ENCODE measurements at regions of chr18 and their contacts with region 1.

Region 1: DNA sequence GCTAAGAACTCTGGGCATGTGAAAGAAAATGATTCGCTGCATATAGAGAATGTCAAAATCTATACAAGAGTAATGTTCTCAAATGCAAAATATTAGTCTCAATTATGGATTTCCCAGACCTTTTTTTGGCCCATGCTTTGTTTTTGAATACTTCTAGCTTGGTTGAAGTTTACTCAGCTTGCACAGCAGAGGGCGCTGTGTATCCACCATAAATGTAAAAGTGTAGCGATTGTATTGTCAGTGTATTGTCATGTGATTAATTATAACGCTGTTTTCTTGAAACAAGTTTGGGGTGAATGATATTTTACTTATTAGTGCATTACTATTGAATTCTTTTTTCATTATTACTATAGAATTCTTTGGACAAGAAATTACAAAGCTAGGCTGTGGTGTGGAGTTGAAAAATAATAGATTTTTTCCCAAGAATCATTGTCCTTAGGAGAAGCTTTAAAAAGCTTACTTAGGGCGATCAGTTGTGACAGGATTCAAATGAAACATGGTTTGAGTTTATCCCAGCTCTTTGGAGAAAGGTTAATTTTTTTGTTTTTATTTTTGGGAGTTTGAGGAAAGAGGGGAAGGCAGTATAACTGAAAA is 98.3 kb downstream of the PIK3C3 start:
- DNase-seq: no peak
- H3K4me3 ChIP-seq: no peak overlapping the region
- CTCF ChIP-seq: peak; percentile 66

Region 2: GRCh38 chr18:41972067-41972925 is 81.0 kb before region 1 on chr18:
- CTCF ChIA-PET with region 1: no interaction called
- POLR2A ChIA-PET with region 1: no interaction called
- DNase-seq: no peak
- H3K4me3 ChIP-seq: no peak overlapping the region
- CTCF ChIP-seq: no peak

Region 3: GRCh38 chr18:42018831-42019230 is 34.5 kb before region 1 on chr18:
- CTCF ChIA-PET with region 1: interaction called, 13 read pairs
- POLR2A ChIA-PET with region 1: no interaction called
- DNase-seq: no peak
- H3K4me3 ChIP-seq: no peak overlapping the region
- CTCF ChIP-seq: no peak

Region 4: GRCh38 chr18:42072407-42072806 is 19.1 kb after region 1 on chr18:
- CTCF ChIA-PET with region 1: interaction called, 143 read pairs
- POLR2A ChIA-PET with region 1: no interaction called
- DNase-seq: no peak
- H3K4me3 ChIP-seq: no peak overlapping the region
- CTCF ChIP-seq: no peak

Region 5: DNA sequence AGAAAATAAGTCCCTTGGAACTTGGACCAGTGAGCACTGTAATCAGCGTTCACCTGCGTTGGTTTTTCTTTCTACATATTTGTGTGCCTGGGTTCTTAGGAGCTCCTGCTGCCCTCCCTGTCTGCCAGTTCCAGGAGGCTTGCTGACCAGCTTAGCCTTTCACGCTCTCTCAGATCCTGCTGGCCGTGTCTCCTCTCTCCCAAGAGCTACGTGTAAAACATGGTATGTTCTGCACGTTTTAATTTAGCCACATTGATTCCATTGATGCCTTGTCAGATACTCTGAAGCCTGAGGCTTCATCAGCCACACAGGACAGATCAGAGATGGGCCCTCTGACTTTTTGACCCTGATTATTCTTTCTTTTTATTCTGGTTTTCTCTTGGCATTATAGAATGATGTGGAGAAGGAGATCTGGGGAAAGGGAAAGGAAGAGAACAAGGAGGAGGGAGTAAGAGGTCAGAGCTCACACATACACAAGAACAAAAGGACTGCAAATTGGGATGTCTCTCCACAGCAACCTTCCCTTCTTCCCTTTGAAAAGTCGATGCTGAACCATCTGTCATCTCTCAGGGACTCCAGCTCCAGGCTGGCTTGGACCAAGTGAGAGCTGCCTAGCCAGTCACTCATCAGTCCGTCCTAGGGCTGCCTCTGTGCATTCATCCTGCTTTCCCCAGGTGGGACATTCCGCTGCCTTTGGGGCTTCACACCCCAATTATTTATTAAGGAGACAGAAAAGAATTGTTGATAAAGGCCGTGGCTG is 54.6 kb after region 1 on chr18:
- CTCF ChIA-PET with region 1: interaction called, 53 read pairs
- POLR2A ChIA-PET with region 1: no interaction called
- DNase-seq: no peak
- H3K4me3 ChIP-seq: no peak overlapping the region
- CTCF ChIP-seq: no peak

Region 6: DNA sequence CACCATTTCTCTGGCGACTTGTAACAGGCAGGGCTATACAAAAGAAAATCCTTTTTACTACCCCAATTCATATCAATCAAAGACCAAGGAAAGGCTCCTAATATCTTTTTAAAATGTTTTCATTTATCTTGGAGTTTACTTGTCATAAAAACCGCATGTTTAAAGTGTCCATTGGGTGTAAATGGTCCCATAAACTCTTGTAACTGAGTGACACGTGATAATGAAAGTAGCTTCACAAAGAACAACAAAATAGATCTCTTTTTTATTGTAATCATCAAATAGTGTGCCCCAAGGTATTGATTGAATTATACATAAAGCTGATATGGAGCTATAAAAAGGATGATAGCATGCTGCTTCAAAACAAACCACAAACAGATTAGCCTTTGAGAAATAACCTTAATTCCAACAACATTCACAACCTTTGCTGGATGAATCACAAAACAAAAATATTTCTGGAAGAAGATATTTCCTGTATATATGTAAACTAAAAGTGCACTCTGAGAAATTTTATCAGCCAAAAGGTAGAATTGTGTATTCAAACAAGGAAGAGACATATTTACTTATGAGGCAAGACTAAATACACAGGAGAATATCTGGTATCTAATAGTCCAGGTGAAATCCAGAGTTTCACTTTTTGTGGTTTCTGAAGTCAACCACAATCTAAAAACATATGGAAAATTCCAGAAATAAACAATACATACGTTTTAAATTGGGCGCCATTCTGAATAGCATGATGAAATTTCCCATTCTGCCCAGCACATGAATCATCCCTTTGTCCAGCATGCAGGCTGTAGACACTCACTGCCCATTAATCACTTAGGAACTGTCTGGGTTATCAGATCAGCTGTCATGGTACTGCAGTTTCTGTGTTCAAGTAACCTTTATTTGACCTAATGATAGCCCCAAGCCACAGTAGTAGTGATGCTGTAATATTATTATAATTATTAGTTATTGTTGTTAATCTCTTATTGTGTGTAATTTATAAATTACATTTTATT is 139.3 kb after region 1 on chr18:
- CTCF ChIA-PET with region 1: no interaction called
- POLR2A ChIA-PET with region 1: no interaction called
- DNase-seq: no peak
- H3K4me3 ChIP-seq: no peak overlapping the region
- CTCF ChIP-seq: no peak

Region 7: GRCh38 chr18:42298759-42299675 is 245.7 kb after region 1 on chr18:
- CTCF ChIA-PET with region 1: interaction called, 13 read pairs
- POLR2A ChIA-PET with region 1: no interaction called
- DNase-seq: peak; percentile 7
- H3K4me3 ChIP-seq: no peak overlapping the region
- CTCF ChIP-seq: peak; percentile 81

Region 8: DNA sequence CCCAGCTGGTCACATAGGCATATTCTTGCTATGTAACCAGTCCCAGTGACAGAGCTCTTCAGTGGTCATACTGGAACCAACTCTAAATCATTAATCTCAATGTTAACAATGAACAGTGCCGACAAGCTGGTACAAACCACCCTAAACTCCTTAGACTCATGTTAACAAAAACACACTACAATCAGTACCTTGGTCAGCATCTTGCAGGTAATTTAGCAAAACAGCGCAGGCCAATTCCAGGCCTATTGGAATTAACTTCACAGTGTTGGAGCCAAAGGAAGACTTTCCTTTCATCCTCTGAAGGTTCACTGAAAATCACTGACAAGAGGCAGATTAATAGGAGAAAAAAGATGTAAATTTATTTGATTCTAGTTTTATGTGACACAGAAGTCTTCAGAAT is 298.2 kb after region 1 on chr18:
- CTCF ChIA-PET with region 1: no interaction called
- POLR2A ChIA-PET with region 1: no interaction called
- DNase-seq: no peak
- H3K4me3 ChIP-seq: no peak overlapping the region
- CTCF ChIP-seq: no peak

Measured in AG04449 (cell line).